PC-9 (cell line): ENCODE measurements at regions of chr5 and their contacts with region 1.

Region 1: GRCh38 chr5:71782771-71783770 is 64.0 kb downstream of the CARTPT start:
- DNase-seq: peak in 1 of 2 experiments; percentile 74
- H3K4me3 ChIP-seq: no peak overlapping the region
- H3K27ac ChIP-seq: no peak overlapping the region
- H3K4me1 ChIP-seq: no peaks in the 10 kb centered on the region
- H3K27me3 ChIP-seq: no peaks in the 10 kb centered on the region
- CTCF ChIP-seq: peak; percentile 80

Region 2: DNA sequence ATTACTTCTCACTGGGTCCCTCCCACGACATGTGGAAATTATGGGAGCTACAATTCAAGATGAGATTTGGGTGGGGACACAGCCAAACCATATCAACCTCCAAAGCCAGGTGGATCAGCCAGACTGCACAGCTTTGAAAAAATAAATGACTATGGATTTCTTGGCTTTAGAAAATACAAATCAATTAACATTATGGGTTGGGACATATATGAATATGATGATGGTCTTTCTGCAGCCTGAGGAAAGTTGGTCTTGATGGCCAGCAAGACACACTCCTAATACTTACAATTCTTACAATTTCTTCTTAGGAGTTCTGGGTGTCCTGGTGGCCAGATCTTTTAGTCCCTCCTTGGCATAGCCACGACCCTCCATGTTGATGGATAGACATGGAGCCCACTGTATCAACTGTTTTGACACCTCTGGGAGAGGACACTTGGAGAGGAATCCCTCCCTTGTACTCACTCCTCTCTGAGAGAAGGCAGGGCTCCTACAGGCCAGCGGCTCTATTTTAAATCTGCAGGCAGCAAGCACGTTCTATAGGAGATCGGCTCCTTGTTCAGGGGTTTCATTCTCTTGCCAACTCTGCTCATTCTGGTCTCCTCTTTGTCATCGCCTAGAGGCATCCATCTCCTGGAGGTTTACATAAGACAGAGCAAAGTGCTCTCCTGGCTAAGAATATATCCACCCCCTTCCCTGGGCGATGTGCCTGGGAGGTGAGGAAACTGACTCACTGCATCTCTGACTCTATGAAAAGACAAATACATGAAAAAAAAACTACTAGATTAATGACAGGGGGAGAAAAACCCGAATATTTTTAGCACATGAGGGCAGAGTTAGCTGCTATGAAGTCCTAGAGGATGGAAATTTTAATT is 81.9 kb after region 1 on chr5:
- CTCF ChIA-PET with region 1: no interaction called
- POLR2A ChIA-PET with region 1: no interaction called
- intact Hi-C with region 1: no loop called
- DNase-seq: peak in 1 of 2 experiments; percentile 10
- H3K4me3 ChIP-seq: no peak overlapping the region
- H3K27ac ChIP-seq: no peak overlapping the region
- H3K4me1 ChIP-seq: no peaks in the 10 kb centered on the region
- H3K27me3 ChIP-seq: no peaks in the 10 kb centered on the region
- CTCF ChIP-seq: no peak

Region 3: GRCh38 chr5:71922584-71923106 is 139.6 kb after region 1 on chr5:
- CTCF ChIA-PET with region 1: interaction called, 4 read pairs
- POLR2A ChIA-PET with region 1: interaction called, 4 read pairs
- intact Hi-C with region 1: loop called (anchors 1 kb)
- DNase-seq: peak; percentile 66 to 92
- H3K4me3 ChIP-seq: no peak overlapping the region
- H3K27ac ChIP-seq: peak overlapping the region; percentile 94
- H3K4me1 ChIP-seq: peaks cover 36% of the 10 kb centered on the region
- H3K27me3 ChIP-seq: no peaks in the 10 kb centered on the region
- CTCF ChIP-seq: no peak

Region 4: GRCh38 chr5:72005671-72006070 is 222.6 kb after region 1 on chr5:
- CTCF ChIA-PET with region 1: no interaction called
- POLR2A ChIA-PET with region 1: no interaction called
- intact Hi-C with region 1: loop called (anchors 10 kb)
- DNase-seq: no peak
- H3K4me3 ChIP-seq: no peak overlapping the region
- H3K27ac ChIP-seq: no peak overlapping the region
- H3K4me1 ChIP-seq: peaks cover 7% of the 10 kb centered on the region; the same call in 1 of the 2 replicates
- H3K27me3 ChIP-seq: no peaks in the 10 kb centered on the region
- CTCF ChIP-seq: no peak

Region 5: DNA sequence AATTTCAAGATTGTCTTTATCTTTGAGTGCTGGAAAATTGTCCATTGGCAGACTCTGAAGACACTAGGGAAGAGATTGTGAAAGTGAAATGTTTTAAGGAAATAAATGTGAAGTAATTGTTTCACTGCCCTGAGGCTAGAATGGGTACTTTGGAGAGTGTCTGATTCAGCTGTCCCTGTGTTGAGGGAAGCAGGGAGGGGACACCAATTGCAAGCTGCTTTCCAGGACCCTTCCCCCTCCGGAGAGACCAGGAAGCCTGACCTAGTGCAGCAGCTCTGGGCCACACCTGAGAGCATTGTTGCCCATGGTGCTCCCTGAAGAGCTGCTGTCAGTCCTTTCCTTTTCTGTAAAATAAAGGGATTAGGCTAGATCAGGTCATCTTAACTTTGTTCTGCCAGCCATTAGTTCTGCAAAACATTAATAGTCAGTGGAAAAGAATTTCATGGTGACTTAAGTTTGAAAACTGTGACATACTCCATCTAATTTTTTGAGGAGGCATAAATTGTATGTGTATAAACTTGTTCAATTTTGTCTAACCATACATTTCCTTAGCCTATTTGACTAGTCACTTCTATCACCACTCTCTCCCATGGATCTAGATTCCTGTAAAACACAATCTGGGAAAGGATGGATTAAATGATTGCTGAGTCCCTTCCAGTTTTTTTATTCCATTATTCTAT is 343.0 kb after region 1 on chr5:
- CTCF ChIA-PET with region 1: no interaction called
- POLR2A ChIA-PET with region 1: no interaction called
- intact Hi-C with region 1: loop called (anchors 5 kb)
- DNase-seq: peak; percentile 66 to 81
- H3K4me3 ChIP-seq: no peak overlapping the region
- H3K27ac ChIP-seq: peak overlapping the region; percentile 46
- H3K4me1 ChIP-seq: peaks cover 25% of the 10 kb centered on the region
- H3K27me3 ChIP-seq: no peaks in the 10 kb centered on the region
- CTCF ChIP-seq: no peak

Region 6: DNA sequence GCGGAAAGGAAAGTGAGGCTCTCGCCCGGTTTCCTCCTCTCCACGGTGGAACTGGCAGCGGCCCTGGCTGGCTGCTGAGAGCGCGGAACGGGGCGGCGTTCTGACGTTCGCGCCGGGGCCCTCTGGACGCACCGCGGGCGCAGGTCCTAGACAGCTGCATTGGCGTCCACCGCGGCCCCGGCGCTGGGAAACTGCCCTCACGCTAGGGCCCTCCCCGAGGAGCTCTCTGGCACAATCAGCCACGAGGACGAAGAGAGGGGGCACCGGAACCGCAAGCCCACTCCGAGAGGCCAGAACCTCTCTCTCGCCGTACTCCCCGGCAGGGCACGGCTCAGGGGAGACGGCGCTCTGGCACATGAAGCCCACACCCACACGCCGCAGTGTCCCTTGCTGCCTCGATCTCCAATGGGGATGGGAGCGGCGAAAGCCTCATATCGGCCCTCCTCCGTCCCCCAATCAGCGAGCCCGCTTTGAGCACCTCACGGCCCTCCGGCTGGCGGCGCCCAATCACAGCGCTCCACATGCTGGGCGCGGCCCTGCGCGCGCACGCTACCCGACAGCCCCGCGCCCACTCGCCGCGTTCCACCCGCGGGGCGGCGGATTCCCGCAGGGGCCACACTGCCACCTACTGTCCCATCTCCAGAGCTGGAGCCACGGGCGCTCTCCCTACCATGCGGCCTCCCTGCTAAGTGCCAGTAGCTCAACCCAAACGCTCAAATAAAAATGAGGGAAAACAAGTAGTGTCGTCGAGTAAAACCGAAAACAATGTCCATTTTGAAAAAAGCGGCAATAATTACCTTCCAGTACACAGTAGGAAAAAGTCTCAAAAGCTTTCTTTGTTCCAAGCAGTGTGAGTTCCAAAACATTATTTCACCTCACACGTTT is 525.1 kb after region 1 on chr5:
- CTCF ChIA-PET with region 1: interaction called, 8 read pairs
- POLR2A ChIA-PET with region 1: no interaction called
- intact Hi-C with region 1: loop called (anchors 1 kb)
- DNase-seq: peak; percentile 93 to 97
- H3K4me3 ChIP-seq: peak overlapping the region; percentile 73
- H3K27ac ChIP-seq: peak overlapping the region; percentile 86
- H3K4me1 ChIP-seq: peaks cover 13% of the 10 kb centered on the region
- H3K27me3 ChIP-seq: no peaks in the 10 kb centered on the region
- CTCF ChIP-seq: peak; percentile 77

Region 7: GRCh38 chr5:72402959-72403628 is 620.0 kb after region 1 on chr5:
- CTCF ChIA-PET with region 1: no interaction called
- POLR2A ChIA-PET with region 1: no interaction called
- intact Hi-C with region 1: no loop called
- DNase-seq: no peak
- H3K4me3 ChIP-seq: no peak overlapping the region
- H3K27ac ChIP-seq: peak overlapping the region; percentile 64
- H3K4me1 ChIP-seq: peaks cover 22% of the 10 kb centered on the region
- H3K27me3 ChIP-seq: no peaks in the 10 kb centered on the region
- CTCF ChIP-seq: peak; percentile 38; the same call in 1 of the 2 replicates

Region 8: GRCh38 chr5:73103870-73104299 is 1320.8 kb after region 1 on chr5:
- CTCF ChIA-PET with region 1: no interaction called
- POLR2A ChIA-PET with region 1: no interaction called
- intact Hi-C with region 1: no loop called
- DNase-seq: no peak
- H3K4me3 ChIP-seq: no peak overlapping the region
- H3K27ac ChIP-seq: no peak overlapping the region
- H3K4me1 ChIP-seq: no peaks in the 10 kb centered on the region
- H3K27me3 ChIP-seq: no peaks in the 10 kb centered on the region
- CTCF ChIP-seq: no peak